CD8-positive, alpha-beta memory T cell (primary cell): ENCODE measurements at regions of chr11 and their contacts with region 1.

Region 1: DNA sequence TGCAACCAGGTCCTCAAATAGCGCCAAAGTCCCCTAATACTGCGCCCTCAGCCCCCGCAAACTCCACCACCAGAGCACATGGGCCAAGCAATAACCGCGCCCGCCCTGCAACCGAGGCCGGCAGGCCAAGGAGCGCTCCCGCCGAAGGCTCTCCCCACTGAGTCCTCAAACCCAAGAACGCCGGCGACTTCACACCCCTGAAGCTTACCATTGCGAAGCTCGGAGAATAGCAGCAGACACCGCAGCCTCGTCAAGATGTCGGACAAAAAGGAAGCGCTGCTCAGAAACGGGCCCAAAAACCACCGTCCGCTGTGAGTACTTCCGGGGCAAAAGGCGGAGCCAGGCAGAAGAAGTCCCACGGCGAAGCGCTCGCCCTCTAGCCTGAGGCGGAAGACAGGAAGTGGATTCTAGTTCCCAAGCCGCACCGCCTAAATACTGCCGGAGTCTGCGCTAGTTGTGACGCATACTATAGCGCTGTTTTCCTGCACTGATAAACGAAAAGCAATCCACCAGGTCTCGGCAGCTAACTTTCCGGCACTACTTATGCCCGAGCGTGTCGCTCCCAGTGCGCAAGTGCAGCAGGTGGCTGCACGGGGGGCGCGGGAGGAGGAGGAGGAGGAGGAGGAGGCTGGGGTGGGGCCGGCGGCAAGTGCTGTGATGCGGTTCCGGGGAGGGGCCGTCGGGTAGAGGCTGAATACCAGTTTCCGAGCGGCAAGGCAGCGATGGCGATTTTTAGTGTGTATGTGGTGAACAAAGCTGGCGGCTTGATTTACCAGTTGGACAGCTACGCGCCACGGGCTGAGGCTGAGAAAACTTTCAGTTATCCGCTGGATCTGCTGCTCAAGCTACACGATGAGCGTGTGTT is at the starts of genes RPS25 and TRAPPC4:
- DNase-seq: peak; percentile 91 to 97 (median 96)
- H3K4me3 ChIP-seq: peak within 1 kb of the TSS; percentile 83
- H3K4me3 Mint-ChIP-seq: peak within 1 kb of the TSS; percentile 97 to 100 (median 99)
- H3K27ac ChIP-seq: peak within 1 kb of the TSS; percentile 94
- H3K27ac Mint-ChIP-seq: peak within 1 kb of the TSS; percentile 97 to 100 (median 100)
- H3K4me1 ChIP-seq: peaks cover 41% of the 10 kb centered on the region
- H3K4me1 Mint-ChIP-seq: peaks cover 38 to 74% (median 54%) of the 10 kb centered on the region in 3 donors
- H3K27me3 ChIP-seq: no peaks in the 10 kb centered on the region
- H3K27me3 Mint-ChIP-seq: peaks cover 0 to 2% of the 10 kb centered on the region in 2 donors
- total RNA-seq, gene RPS25: 1,415 to 1,447 TPM
- total RNA-seq, gene TRAPPC4: 154 TPM

Region 2: DNA sequence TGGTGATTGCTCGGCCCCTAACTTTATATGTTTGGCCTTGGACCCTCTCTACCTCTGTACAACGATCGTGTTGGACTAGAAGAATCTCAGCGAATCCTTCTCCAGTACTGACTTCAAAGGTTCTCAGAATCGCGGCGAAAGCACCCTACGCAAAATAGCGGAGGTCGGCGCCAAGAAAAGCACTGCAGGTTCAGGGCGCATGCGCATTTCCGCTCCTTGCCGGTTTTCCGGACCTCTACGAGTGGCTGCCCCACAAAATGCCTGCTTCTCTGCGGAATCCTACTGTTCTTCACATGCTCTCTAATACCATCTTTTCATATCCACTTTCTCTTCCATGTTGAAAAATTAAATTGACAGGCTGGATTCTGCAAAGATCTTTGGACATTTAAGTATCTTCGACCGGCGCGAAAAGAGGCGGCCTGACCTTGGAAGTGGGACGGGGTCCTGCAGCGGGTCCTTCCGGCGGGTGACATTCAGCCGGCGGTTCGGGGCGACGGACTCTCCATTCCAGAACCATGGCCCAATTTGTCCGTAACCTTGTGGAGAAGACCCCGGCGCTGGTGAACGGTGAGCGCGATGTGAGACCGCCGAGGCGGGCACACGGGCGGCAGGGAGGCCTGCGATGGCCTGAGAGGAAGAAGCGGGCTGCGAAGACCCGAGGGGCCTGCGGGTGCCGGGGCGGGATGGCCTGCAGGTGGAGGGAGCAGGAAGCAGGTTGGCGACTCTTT is 617.0 kb before region 1 on chr11 and contains the start of gene ATP5MG:
- CTCF ChIA-PET with region 1: no interaction called
- POLR2A ChIA-PET with region 1: interaction called, 10 read pairs
- DNase-seq: peak; percentile 87 to 95 (median 91)
- H3K4me3 ChIP-seq: peak within 1 kb of the TSS; percentile 81
- H3K4me3 Mint-ChIP-seq: peak within 1 kb of the TSS; percentile 91 to 97 (median 96)
- H3K27ac ChIP-seq: peak within 1 kb of the TSS; percentile 91
- H3K27ac Mint-ChIP-seq: peak within 1 kb of the TSS; percentile 97 to 100 (median 100)
- H3K4me1 ChIP-seq: peaks cover 69% of the 10 kb centered on the region
- H3K4me1 Mint-ChIP-seq: peaks cover 69 to 98% (median 91%) of the 10 kb centered on the region in 3 donors
- H3K27me3 ChIP-seq: no peaks in the 10 kb centered on the region
- H3K27me3 Mint-ChIP-seq: peaks cover 0 to 3% of the 10 kb centered on the region in 2 donors
- total RNA-seq, gene ATP5MG: 277 to 280 TPM

Region 3: GRCh38 chr11:118948000-118948399 is 70.3 kb before region 1 on chr11:
- CTCF ChIA-PET with region 1: no interaction called
- POLR2A ChIA-PET with region 1: no interaction called
- DNase-seq: no peak
- H3K4me3 ChIP-seq: no peak overlapping the region
- H3K4me3 Mint-ChIP-seq: peak overlapping the region in 1 of 7 donors; percentile 14
- H3K27ac ChIP-seq: no peak overlapping the region
- H3K27ac Mint-ChIP-seq: peak overlapping the region in 2 of 8 donors; percentile 24 to 29
- H3K4me1 ChIP-seq: no peaks in the 10 kb centered on the region
- H3K4me1 Mint-ChIP-seq: peaks cover 3 to 6% (median 4%) of the 10 kb centered on the region in 3 donors
- H3K27me3 ChIP-seq: no peaks in the 10 kb centered on the region
- H3K27me3 Mint-ChIP-seq: peaks cover 5 to 6% of the 10 kb centered on the region in 2 donors

Region 4: GRCh38 chr11:118997627-118998387 is 20.5 kb before region 1 on chr11 and contains the start of gene CENATAC:
- CTCF ChIA-PET with region 1: interaction called, 11 read pairs
- POLR2A ChIA-PET with region 1: interaction called, 23 read pairs
- DNase-seq: peak; percentile 94 to 98 (median 94)
- H3K4me3 ChIP-seq: peak within 1 kb of the TSS; percentile 94
- H3K4me3 Mint-ChIP-seq: peak within 1 kb of the TSS; percentile 90 to 99 (median 94)
- H3K27ac ChIP-seq: peak within 1 kb of the TSS; percentile 84
- H3K27ac Mint-ChIP-seq: peak within 1 kb of the TSS; percentile 79 to 100 (median 97)
- H3K4me1 ChIP-seq: peaks cover 20% of the 10 kb centered on the region
- H3K4me1 Mint-ChIP-seq: peaks cover 33 to 46% (median 34%) of the 10 kb centered on the region in 3 donors
- H3K27me3 ChIP-seq: no peaks in the 10 kb centered on the region
- H3K27me3 Mint-ChIP-seq: peaks cover 0 to 3% of the 10 kb centered on the region in 2 donors
- total RNA-seq, gene CENATAC: 29.1 to 34.6 TPM

Region 5: DNA sequence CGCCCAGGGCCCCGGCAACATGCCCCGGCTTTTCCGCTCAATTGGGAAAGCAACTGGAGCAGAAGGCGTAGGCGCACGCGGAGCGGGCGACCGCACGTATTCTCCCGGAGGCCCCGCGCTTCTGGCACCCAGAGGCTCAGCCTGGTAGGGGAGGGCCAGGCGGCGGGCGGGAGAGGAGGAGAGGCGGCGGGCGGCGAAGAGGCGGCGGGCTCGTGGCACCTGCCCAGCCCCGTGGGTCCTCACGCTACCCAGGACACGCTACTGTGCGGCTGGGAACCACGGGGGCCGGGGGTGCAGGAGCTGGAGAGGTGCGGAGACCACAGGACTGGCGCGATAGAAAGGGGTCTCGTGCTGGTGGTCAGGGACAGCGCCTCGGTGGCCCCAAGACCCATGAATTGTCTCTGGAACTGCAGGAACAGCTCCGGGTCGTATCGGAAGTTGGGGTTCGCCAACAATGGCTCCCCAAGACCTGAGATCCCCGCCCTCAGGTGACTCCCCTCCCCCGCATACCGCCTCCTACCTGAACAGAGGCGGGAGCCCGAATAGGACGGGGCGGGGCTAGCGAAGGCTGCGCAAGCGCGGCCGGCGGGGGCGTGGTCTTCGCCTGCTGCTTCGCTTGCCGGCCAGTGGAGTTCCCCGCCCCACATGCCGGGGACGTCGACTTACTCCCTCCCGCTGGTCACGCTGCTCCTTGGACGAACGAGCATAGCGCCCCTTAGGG is 12.2 kb after region 1 on chr11 and contains the start of gene SLC37A4:
- CTCF ChIA-PET with region 1: interaction called, 8 read pairs
- POLR2A ChIA-PET with region 1: interaction called, 10 read pairs
- DNase-seq: peak; percentile 98 to 99 (median 98)
- H3K4me3 ChIP-seq: peak within 1 kb of the TSS; percentile 85
- H3K4me3 Mint-ChIP-seq: peak within 1 kb of the TSS; percentile 82 to 96 (median 90)
- H3K27ac ChIP-seq: peak within 1 kb of the TSS; percentile 75
- H3K27ac Mint-ChIP-seq: peak within 1 kb of the TSS; percentile 72 to 97 (median 92)
- H3K4me1 ChIP-seq: peaks cover 12% of the 10 kb centered on the region
- H3K4me1 Mint-ChIP-seq: peaks cover 11 to 24% (median 19%) of the 10 kb centered on the region in 3 donors
- H3K27me3 ChIP-seq: no peaks in the 10 kb centered on the region
- H3K27me3 Mint-ChIP-seq: no peaks in the 10 kb centered on the region
- total RNA-seq, gene SLC37A4: 22.7 to 28.5 TPM

Region 6: DNA sequence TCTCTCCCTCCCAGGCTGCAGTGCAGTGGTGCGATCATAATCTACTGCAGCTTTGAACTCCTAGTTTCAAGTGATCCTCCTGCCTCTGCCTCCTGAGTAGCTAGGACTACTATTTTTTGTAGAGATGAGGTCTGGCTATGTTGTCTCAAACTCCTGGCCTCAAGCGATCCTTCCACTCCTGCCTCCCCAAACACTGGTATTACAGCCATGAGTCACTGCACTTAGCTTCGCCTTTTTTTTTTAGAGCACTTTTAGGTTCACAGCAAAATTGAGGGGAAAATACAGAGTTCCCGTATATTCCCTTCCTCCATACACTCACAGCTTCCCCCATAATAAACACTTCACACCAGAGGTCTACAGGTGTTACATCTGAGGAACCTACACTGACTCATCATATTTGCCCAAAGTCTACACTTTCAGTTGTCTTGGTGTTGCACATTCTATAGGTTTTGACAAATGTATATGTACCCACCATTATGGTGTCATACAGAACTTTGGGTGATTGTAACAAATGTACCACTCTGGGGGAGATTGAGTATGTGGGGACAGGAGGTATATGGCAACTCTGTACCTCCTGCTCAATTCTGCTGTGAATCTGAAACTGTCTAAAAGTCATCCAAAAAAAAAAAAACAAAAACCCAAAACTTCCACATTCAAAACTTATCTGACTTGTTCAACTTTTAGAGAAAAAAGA is 23.7 kb after region 1 on chr11:
- CTCF ChIA-PET with region 1: no interaction called
- POLR2A ChIA-PET with region 1: no interaction called
- DNase-seq: no peak
- H3K4me3 ChIP-seq: no peak overlapping the region
- H3K4me3 Mint-ChIP-seq: no peak overlapping the region
- H3K27ac ChIP-seq: no peak overlapping the region
- H3K27ac Mint-ChIP-seq: peak overlapping the region in 2 of 8 donors; percentile 12 to 43
- H3K4me1 ChIP-seq: no peaks in the 10 kb centered on the region
- H3K4me1 Mint-ChIP-seq: no peaks in the 10 kb centered on the region
- H3K27me3 ChIP-seq: no peaks in the 10 kb centered on the region
- H3K27me3 Mint-ChIP-seq: peaks cover 0 to 3% of the 10 kb centered on the region in 2 donors

Region 7: GRCh38 chr11:119057000-119057769 is 38.9 kb after region 1 on chr11 and contains the start of gene HYOU1:
- CTCF ChIA-PET with region 1: interaction called, 6 read pairs
- POLR2A ChIA-PET with region 1: interaction called, 10 read pairs
- DNase-seq: peak; percentile 98 to 99 (median 98)
- H3K4me3 ChIP-seq: peak within 1 kb of the TSS; percentile 84
- H3K4me3 Mint-ChIP-seq: peak within 1 kb of the TSS; percentile 91 to 99 (median 95)
- H3K27ac ChIP-seq: peak within 1 kb of the TSS; percentile 82
- H3K27ac Mint-ChIP-seq: peak within 1 kb of the TSS; percentile 85 to 99 (median 98)
- H3K4me1 ChIP-seq: peaks cover 22% of the 10 kb centered on the region
- H3K4me1 Mint-ChIP-seq: peaks cover 35 to 43% (median 43%) of the 10 kb centered on the region in 3 donors
- H3K27me3 ChIP-seq: no peaks in the 10 kb centered on the region
- H3K27me3 Mint-ChIP-seq: no peaks in the 10 kb centered on the region
- total RNA-seq, gene HYOU1: 181 TPM

Region 8: GRCh38 chr11:119180729-119181676 is 162.7 kb after region 1 on chr11:
- CTCF ChIA-PET with region 1: no interaction called
- POLR2A ChIA-PET with region 1: no interaction called
- DNase-seq: no peak
- H3K4me3 ChIP-seq: no peak overlapping the region
- H3K4me3 Mint-ChIP-seq: no peak overlapping the region
- H3K27ac ChIP-seq: no peak overlapping the region
- H3K27ac Mint-ChIP-seq: peak overlapping the region in 1 of 8 donors; percentile 24
- H3K4me1 ChIP-seq: peaks cover 11% of the 10 kb centered on the region
- H3K4me1 Mint-ChIP-seq: peaks cover 0 to 3% (median 3%) of the 10 kb centered on the region in 3 donors
- H3K27me3 ChIP-seq: no peaks in the 10 kb centered on the region
- H3K27me3 Mint-ChIP-seq: peaks cover 0 to 5% of the 10 kb centered on the region in 2 donors